ENCODE measurements at regions of chr18 and their contacts with region 1.

Region 1: DNA sequence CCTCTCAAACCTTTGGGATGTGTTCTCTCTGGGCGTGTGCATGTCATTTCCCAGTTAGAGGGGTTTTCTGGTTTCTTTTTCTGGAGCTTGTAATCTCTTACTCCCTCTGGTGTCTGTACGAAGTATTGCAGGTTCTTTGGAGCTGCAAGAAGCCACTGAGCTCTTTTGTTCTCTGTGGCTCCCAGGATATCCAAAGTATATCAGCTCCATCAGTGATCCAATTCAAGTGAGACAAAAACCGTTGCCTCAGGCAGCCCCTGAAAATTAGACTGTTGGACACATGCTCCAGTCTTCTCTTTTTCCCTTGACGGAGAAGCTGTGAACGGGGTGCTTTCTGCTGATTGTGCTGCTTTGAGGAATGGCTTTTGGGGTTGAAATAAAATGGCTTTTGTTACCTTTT is 59.0 kb upstream of the LDLRAD4 start:
- DNase-seq: peak in 1 of 2 donors; percentile 52
- ATAC-seq: peak in 3 of 8 donors; percentile 33 to 39 (median 37)
- H3K4me3 ChIP-seq: no peak overlapping the region
- H3K27ac ChIP-seq: no peak overlapping the region
- H3K4me1 ChIP-seq: peaks cover 0 to 2% (median 0%) of the 10 kb centered on the region in 9 donors
- H3K27me3 ChIP-seq: peaks cover 0 to 5% (median 0%) of the 10 kb centered on the region in 7 donors
- CTCF ChIP-seq: peak; percentile 78 to 85 (median 84)

Region 2: GRCh38 chr18:12990967-12991838 is 168.4 kb before region 1 on chr18 and contains the start of gene CEP192:
- intact Hi-C with region 1: loop called in 2 of 10 experiments (anchors 5 to 10 kb)
- DNase-seq: peak; percentile 97 to 98
- ATAC-seq: peak; percentile 98 to 100 (median 99)
- H3K4me3 ChIP-seq: peak within 1 kb of the TSS; percentile 49 to 93 (median 78)
- H3K27ac ChIP-seq: peak within 1 kb of the TSS; percentile 54 to 92 (median 87)
- H3K4me1 ChIP-seq: peaks cover 6 to 35% (median 24%) of the 10 kb centered on the region in 9 donors
- H3K27me3 ChIP-seq: no peaks in the 10 kb centered on the region
- CTCF ChIP-seq: peak in 3 of 9 donors; percentile 9 to 13 (median 13)
- total RNA-seq, gene CEP192: 18.3 to 35.6 (median 32.4) TPM

Region 3: DNA sequence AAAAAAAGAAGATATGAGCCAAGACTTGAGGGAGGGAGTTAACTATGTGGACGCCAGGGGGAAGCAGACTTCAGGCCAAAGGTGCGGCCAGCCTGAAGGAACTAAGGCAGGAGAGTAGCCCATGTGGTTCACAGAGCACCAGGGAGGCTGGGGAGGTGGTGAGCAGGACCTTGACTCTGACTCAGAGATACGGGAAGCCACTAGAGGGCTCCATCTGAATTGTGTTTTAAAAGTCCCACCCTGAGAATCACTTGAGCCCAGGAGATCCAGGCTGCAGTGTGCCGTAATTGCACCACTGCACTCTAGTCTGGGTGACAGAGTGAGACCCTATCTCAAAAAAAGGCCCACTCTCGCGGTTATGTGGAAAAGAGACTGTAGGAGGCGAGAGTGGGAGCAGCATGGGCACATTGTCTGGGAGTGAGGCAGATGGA is 156.1 kb before region 1 on chr18:
- intact Hi-C with region 1: loop called in 5 of 10 experiments (anchors 5 to 10 kb)
- DNase-seq: peak in 1 of 2 donors; percentile 18
- ATAC-seq: peak; percentile 58 to 94 (median 81)
- H3K4me3 ChIP-seq: no peak overlapping the region
- H3K27ac ChIP-seq: no peak overlapping the region
- H3K4me1 ChIP-seq: peaks cover 0 to 9% (median 4%) of the 10 kb centered on the region in 9 donors
- H3K27me3 ChIP-seq: no peaks in the 10 kb centered on the region
- CTCF ChIP-seq: peak; percentile 13 to 64 (median 46)

Region 4: DNA sequence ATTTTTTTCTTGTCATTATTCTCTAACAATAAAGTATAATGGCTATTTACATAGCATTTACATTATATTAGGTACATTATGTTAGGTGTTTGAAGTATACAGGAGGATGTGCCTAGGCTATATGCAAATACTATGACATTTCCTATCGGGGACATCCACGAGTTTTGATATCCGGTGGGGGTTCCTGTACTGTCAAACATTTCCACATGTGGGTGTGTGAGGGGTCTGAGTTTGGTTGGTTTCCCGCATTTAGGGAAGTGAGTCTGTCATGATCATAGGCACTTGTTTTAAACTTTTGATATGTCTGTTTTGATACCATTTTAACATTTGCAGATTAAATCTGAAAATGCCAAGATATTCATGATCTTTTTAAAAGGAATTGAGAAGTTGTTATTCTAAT is 92.5 kb before region 1 on chr18:
- intact Hi-C with region 1: loop called in 1 of 10 experiments (anchors 10 kb)
- DNase-seq: no peak
- ATAC-seq: no peak
- H3K4me3 ChIP-seq: no peak overlapping the region
- H3K27ac ChIP-seq: no peak overlapping the region
- H3K4me1 ChIP-seq: peaks cover 0 to 8% (median 0%) of the 10 kb centered on the region in 9 donors
- H3K27me3 ChIP-seq: no peaks in the 10 kb centered on the region
- CTCF ChIP-seq: no peak

Region 5: GRCh38 chr18:13112982-13113381 is 46.6 kb before region 1 on chr18:
- intact Hi-C with region 1: loop called in 2 of 10 experiments (anchors 1 to 5 kb)
- DNase-seq: peak; percentile 77 to 80
- ATAC-seq: peak; percentile 93 to 100 (median 97)
- H3K4me3 ChIP-seq: no peak overlapping the region
- H3K27ac ChIP-seq: peak overlapping the region in 7 of 10 donors; percentile 11 to 66 (median 40)
- H3K4me1 ChIP-seq: peaks cover 0 to 13% (median 3%) of the 10 kb centered on the region in 9 donors
- H3K27me3 ChIP-seq: no peaks in the 10 kb centered on the region
- CTCF ChIP-seq: peak; percentile 30 to 73 (median 51)

Region 6: DNA sequence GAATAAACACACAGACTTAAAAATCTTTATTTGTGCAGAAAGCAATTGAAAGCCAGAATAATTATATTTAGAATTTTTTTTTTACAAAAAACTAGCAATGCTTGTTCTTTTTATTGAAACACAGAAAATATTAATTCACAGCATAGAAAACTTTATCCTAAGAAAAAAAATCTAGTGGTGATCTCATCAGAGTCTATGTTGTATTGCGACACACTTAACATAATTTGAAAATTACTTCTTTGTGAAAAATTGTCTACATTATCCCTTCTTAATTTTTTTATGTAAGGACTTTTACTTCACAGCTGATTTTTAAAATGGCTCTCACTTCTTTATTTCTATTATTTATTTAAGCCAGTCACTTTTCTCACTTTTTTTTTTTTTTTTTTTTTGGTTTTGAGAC is 162.3 kb after region 1 on chr18:
- intact Hi-C with region 1: no loop called
- DNase-seq: no peak
- ATAC-seq: no peak
- H3K4me3 ChIP-seq: no peak overlapping the region
- H3K27ac ChIP-seq: no peak overlapping the region
- H3K4me1 ChIP-seq: peaks cover 0 to 27% (median 17%) of the 10 kb centered on the region in 9 donors
- H3K27me3 ChIP-seq: no peaks in the 10 kb centered on the region
- CTCF ChIP-seq: no peak